ENCODE measurements at regions of chr18 and their contacts with region 1.

Region 1: GRCh38 chr18:10787293-10787901 is 261.6 kb downstream of the NAPG start:
- H3K4me3 Mint-ChIP-seq: no peak overlapping the region
- H3K27ac Mint-ChIP-seq: no peak overlapping the region
- H3K4me1 Mint-ChIP-seq: peaks cover 27% of the 10 kb centered on the region
- H3K27me3 Mint-ChIP-seq: peaks cover 8% of the 10 kb centered on the region

Region 2: DNA sequence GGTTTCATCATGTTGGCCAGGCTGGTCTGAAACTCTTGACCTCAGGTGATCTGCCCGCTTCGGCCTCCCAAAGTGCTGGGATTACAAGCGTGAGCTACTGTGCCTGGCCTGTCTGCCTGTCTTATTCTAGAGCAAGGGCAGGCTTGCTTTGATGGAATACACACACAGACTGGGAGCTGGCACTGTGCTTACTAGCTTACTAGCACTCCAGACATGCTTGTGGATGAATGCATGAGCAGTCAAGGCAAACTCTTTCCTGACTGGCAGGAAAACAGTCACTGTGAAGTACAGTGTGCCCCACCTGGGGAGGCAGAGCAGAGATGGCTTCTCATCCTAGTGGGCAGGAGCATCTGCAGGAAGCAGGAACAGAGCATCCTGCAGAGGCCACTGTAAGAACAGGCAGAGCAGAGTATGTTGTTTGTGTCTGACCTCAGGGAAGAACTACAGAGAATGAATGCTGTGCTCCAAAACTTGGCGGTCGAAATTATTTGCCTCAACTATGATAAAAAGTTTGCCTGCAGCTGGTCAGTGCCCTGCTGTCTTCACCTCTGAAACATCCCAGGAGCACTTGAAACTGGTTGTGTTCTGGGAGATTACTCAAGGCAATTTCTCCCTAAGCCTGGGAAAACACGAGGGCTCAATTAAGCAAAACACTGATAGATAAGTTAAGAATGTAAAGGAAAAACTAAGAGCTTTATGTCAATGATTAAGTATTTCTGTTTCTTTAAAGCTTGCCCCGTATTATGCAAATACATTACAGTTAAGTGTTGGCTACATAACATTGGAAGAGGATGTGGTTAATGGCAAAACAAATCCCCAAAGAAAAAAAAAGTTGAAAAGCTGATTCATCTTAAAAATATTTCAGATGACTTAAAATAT is 771.2 kb before region 1 on chr18:
- intact Hi-C with region 1: no loop called
- H3K4me3 Mint-ChIP-seq: no peak overlapping the region
- H3K27ac Mint-ChIP-seq: peak overlapping the region; percentile 48
- H3K4me1 Mint-ChIP-seq: peaks cover 60% of the 10 kb centered on the region
- H3K27me3 Mint-ChIP-seq: no peaks in the 10 kb centered on the region

Region 3: DNA sequence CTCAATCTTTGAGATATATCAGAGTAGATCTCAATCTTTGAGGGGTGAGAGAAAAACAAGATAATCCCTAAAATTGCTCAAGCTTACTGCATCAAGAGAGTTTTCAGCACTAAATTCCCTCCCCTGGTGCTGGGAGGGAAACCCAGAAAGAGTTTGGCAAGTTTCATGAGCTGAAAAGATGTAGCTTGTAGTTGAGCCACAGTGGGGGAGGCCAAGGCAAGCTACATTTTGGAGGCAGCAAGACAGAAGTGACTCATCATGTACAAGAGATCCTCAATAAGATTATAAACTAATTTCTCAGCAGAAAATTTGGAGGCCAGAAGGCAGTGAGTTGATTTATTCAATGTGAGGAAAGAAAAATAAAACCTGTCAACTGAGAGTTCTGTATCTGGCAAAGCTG is 53.8 kb after region 1 on chr18:
- intact Hi-C with region 1: no loop called
- H3K4me3 Mint-ChIP-seq: no peak overlapping the region
- H3K27ac Mint-ChIP-seq: no peak overlapping the region
- H3K4me1 Mint-ChIP-seq: no peaks in the 10 kb centered on the region
- H3K27me3 Mint-ChIP-seq: no peaks in the 10 kb centered on the region

Region 4: GRCh38 chr18:11040823-11041656 is 253.6 kb after region 1 on chr18:
- intact Hi-C with region 1: loop called (anchors 2 kb)
- H3K4me3 Mint-ChIP-seq: no peak overlapping the region
- H3K27ac Mint-ChIP-seq: no peak overlapping the region
- H3K4me1 Mint-ChIP-seq: no peaks in the 10 kb centered on the region
- H3K27me3 Mint-ChIP-seq: peaks cover 3% of the 10 kb centered on the region

Region 5: DNA sequence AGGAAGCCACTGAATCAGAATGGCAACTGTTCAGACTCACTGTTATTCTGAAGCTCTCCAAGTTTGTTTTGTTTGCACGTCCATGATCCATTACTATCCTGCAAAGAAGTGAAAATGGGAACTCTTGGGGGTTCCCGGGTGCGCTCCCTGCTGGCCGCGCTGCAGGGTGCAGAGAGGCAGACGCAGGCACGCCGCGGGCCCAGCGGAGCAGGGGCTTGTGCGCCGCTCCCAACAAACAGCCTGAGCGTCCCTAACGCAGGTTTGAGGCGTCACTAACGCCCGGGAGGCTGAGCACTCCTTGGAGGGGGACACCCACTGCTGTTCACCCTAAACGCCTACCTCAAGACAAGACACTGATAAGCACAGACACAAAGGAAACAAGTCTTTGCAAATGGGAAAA is 376.3 kb after region 1 on chr18:
- intact Hi-C with region 1: loop called (anchors 5 kb)
- H3K4me3 Mint-ChIP-seq: peak overlapping the region; percentile 48
- H3K27ac Mint-ChIP-seq: peak overlapping the region; percentile 12
- H3K4me1 Mint-ChIP-seq: peaks cover 6% of the 10 kb centered on the region
- H3K27me3 Mint-ChIP-seq: peaks cover 5% of the 10 kb centered on the region